ENCODE measurements at regions of chrX and their contacts with region 1.

Region 1: DNA sequence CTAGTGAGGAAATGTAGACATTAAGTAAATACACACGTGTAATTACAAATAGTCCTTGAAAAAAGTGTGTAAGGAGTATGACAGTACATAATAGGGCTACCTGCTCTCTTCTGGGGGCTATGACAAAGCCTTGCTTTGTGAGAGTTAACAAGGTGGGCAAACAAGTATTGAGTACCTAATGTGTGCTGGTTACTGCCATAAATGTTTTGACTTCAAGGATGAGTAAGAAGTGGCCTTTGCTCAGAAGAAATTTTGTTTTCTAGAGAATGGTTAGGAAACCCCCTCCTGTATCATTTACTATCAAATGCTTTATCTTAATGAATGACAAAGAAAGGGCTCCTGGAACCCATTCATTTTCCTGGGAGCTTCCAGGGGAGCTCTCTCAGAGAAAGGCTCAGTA is 167.0 kb upstream of the CASK start:
- DNase-seq: no peak
- ATAC-seq: peak; percentile 70
- H3K4me3 Mint-ChIP-seq: no peak overlapping the region
- H3K27ac Mint-ChIP-seq: no peak overlapping the region
- H3K4me1 Mint-ChIP-seq: peaks cover 20% of the 10 kb centered on the region
- H3K27me3 Mint-ChIP-seq: no peaks in the 10 kb centered on the region

Region 2: GRCh38 chrX:42107495-42108488 is 17.4 kb after region 1 on chrX:
- CTCF ChIA-PET with region 1: no interaction called
- POLR2A ChIA-PET with region 1: no interaction called
- intact Hi-C with region 1: loop called in 1 of 2 experiments (anchors 2 kb)
- DNase-seq: peak; percentile 43
- ATAC-seq: peak; percentile 86
- H3K4me3 Mint-ChIP-seq: no peak overlapping the region
- H3K27ac Mint-ChIP-seq: no peak overlapping the region
- H3K4me1 Mint-ChIP-seq: peaks cover 15% of the 10 kb centered on the region
- H3K27me3 Mint-ChIP-seq: no peaks in the 10 kb centered on the region

Measured in activated CD4-positive, alpha-beta T cell treated with anti-CD3 and anti-CD28 coated beads for 36 hours (primary cell).